Activated T-helper 2 cell treated with anti-CD3 and anti-CD28 coated beads, Interferon-gamma antibody, Interleukin-2, Interleukin-4, amounts not matched to agents 10 μg/mL and 5 μg/mL and 100 μg/mL, durations not matched to agents 14 hours and 24 hours and 36 hours (primary cell): ENCODE measurements at regions of chr5 and their contacts with region 1.

Region 1: GRCh38 chr5:68460147-68460798 is 244.7 kb downstream of the PIK3R1 start:
- DNase-seq: no peak
- H3K4me3 Mint-ChIP-seq: no peak overlapping the region
- H3K27ac Mint-ChIP-seq: no peak overlapping the region
- H3K4me1 Mint-ChIP-seq: peaks cover 23% of the 10 kb centered on the region
- H3K27me3 Mint-ChIP-seq: peaks cover 2% of the 10 kb centered on the region

Region 2: GRCh38 chr5:68046445-68046844 is 413.8 kb before region 1 on chr5:
- intact Hi-C with region 1: no loop called
- DNase-seq: no peak
- H3K4me3 Mint-ChIP-seq: no peak overlapping the region
- H3K27ac Mint-ChIP-seq: no peak overlapping the region
- H3K4me1 Mint-ChIP-seq: no peaks in the 10 kb centered on the region
- H3K27me3 Mint-ChIP-seq: peaks cover 2% of the 10 kb centered on the region

Region 3: DNA sequence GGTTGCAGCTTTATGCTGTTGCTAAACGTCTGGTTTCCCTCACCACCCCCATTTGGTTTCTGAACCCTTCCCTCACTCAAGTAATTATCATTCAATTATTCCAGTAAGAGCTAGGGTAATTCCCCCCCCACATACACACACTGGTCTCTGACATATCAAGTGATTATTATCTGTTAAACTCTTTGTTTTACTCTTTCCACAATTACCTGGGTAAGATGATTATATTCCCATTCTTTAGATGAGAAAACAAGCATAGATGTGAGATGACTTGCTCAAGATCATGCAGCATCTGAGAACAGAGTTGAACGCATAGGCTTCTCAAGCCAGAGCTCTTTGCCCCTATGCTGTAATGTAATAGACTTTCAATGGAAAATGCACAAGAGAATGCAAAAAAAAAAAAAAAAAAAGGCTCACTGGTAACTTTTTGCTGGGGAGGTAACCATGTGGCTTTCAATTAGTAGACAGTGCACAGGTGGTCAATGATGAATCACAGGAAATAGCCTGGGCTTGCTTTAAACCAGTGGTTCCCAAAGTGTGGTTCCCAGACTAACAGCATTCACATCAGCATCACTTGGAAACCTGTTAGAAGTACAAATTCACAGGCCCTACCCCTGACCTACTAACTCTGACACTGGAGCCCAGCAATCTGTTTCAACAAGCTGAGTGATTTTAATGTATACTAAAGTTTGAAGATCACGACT is 157.1 kb before region 1 on chr5:
- intact Hi-C with region 1: loop called (anchors 5 kb)
- DNase-seq: no peak
- H3K4me3 Mint-ChIP-seq: no peak overlapping the region
- H3K27ac Mint-ChIP-seq: peak overlapping the region; percentile 74
- H3K4me1 Mint-ChIP-seq: peaks cover 55% of the 10 kb centered on the region
- H3K27me3 Mint-ChIP-seq: peaks cover 4% of the 10 kb centered on the region

Region 4: DNA sequence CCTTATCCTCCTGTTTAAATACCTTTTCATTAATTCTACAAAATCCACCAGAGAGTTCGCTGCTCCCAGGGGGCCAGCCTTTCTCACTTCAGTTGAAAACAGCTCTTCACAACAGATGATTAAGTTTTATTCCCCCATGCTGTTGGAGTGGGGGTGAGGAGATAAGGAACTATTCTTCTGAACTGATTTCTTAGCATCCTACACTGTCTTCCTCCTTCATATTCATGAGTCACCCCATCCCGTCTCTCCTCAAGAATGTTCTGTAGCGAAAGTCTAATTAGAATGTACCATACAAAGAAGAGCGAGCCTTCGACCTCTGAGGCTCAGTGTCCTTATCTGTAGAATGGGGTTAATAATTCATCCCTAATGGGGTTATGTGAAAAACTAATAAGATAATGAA is 106.7 kb before region 1 on chr5:
- intact Hi-C with region 1: no loop called
- DNase-seq: no peak
- H3K4me3 Mint-ChIP-seq: no peak overlapping the region
- H3K27ac Mint-ChIP-seq: no peak overlapping the region
- H3K4me1 Mint-ChIP-seq: peaks cover 2% of the 10 kb centered on the region
- H3K27me3 Mint-ChIP-seq: peaks cover 2% of the 10 kb centered on the region

Region 5: GRCh38 chr5:68379275-68380036 is 80.8 kb before region 1 on chr5:
- intact Hi-C with region 1: loop called (anchors 1 kb)
- DNase-seq: no peak
- H3K4me3 Mint-ChIP-seq: no peak overlapping the region
- H3K27ac Mint-ChIP-seq: peak overlapping the region; percentile 61
- H3K4me1 Mint-ChIP-seq: peaks cover 70% of the 10 kb centered on the region
- H3K27me3 Mint-ChIP-seq: peaks cover 2% of the 10 kb centered on the region

Region 6: GRCh38 chr5:68484307-68485068 is 24.2 kb after region 1 on chr5:
- intact Hi-C with region 1: no loop called
- DNase-seq: no peak
- H3K4me3 Mint-ChIP-seq: no peak overlapping the region
- H3K27ac Mint-ChIP-seq: no peak overlapping the region
- H3K4me1 Mint-ChIP-seq: no peaks in the 10 kb centered on the region
- H3K27me3 Mint-ChIP-seq: peaks cover 30% of the 10 kb centered on the region

Region 7: GRCh38 chr5:68749631-68750030 is 289.4 kb after region 1 on chr5:
- intact Hi-C with region 1: no loop called
- DNase-seq: no peak
- H3K4me3 Mint-ChIP-seq: no peak overlapping the region
- H3K27ac Mint-ChIP-seq: no peak overlapping the region
- H3K4me1 Mint-ChIP-seq: peaks cover 5% of the 10 kb centered on the region
- H3K27me3 Mint-ChIP-seq: peaks cover 29% of the 10 kb centered on the region

Region 8: DNA sequence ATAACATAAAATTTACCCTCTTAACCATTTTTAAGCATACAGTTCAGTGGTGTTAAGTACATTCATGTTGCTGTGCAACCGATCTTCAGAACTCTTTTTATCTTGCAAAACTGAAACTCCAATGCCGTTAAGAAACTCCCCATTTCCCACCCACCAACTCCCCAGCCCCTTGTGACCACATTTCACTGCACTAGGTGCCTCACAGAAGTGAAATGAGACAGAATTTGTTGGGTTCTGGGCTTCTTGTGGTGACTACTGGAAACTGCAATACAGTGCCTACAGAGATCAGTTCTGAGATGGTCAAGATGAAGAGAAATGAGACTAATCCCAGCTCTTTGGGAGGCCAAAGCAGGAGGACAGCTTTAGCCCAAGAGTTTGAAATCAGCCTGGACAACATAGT is 431.4 kb after region 1 on chr5:
- intact Hi-C with region 1: loop called (anchors 1 kb)
- DNase-seq: peak; percentile 48
- H3K4me3 Mint-ChIP-seq: no peak overlapping the region
- H3K27ac Mint-ChIP-seq: peak overlapping the region; percentile 39
- H3K4me1 Mint-ChIP-seq: peaks cover 65% of the 10 kb centered on the region
- H3K27me3 Mint-ChIP-seq: no peaks in the 10 kb centered on the region